ENCODE measurements at regions of chr11 and their contacts with region 1.

Region 1: GRCh38 chr11:100575870-100576705 is 111.0 kb upstream of the ARHGAP42 start:
- DNase-seq: peak; percentile 43
- ATAC-seq: peak; percentile 84
- H3K4me3 ChIP-seq: no peak overlapping the region
- H3K27ac ChIP-seq: no peak overlapping the region
- H3K4me1 ChIP-seq: peaks cover 0 to 5% of the 10 kb centered on the region in 2 experiments; a peak in 1 of 4 replicates
- H3K27me3 ChIP-seq: 0 out of 2 replicates have a peak, but pooled peaks cover under 1% of the 10 kb centered on the region
- CTCF ChIP-seq: peak; percentile 63 to 83 (median 79)
- POLR2A ChIP-seq: no peak
- RAD21 ChIP-seq: peak; percentile 92

Region 2: GRCh38 chr11:100855466-100856067 is 279.5 kb after region 1 on chr11:
- CTCF ChIA-PET with region 1: interaction called, 18 read pairs
- POLR2A ChIA-PET with region 1: no interaction called
- RAD21 ChIA-PET with region 1: interaction called, 4 to 7 read pairs
- intact Hi-C with region 1: loop called (anchors 1 kb)
- DNase-seq: peak; percentile 52
- ATAC-seq: no peak
- H3K4me3 ChIP-seq: no peak overlapping the region
- H3K27ac ChIP-seq: no peak overlapping the region
- H3K4me1 ChIP-seq: peaks cover 0 to 26% of the 10 kb centered on the region in 2 experiments; a peak in 2 of 4 replicates
- H3K27me3 ChIP-seq: no peaks in the 10 kb centered on the region
- CTCF ChIP-seq: peak; percentile 49 to 71 (median 69); a peak in 5 of 6 replicates
- POLR2A ChIP-seq: no peak
- RAD21 ChIP-seq: peak; percentile 84

Region 3: DNA sequence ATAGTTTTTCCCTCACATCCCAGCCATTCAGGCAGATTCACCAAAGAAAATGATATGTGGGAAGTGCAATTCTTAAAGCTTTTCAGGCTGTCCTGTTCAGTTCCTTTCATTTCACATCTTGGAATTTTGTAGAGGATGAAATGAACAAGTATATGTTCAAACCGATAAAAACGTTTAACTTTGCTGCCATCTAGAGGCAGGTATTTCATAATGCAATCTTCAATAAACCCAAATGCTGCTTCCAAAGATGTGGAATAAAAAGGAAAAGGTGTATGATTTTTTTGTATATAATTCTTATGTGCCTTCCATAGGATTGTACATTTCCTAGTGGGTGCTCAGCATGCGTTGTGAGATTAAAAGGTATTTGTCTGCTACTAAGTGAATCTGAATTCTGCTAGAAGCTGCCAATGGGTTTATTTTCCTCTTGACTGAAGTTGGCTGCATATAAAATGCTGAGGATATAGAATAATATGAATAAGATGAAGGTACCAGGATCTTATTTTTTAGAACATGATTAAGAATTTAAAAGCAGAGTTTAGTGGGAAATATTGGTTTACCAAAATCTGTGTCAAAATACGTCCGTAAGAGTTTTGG is 354.2 kb after region 1 on chr11:
- CTCF ChIA-PET with region 1: interaction called, 28 read pairs
- POLR2A ChIA-PET with region 1: no interaction called
- RAD21 ChIA-PET with region 1: no interaction called
- intact Hi-C with region 1: loop called (anchors 1 kb)
- DNase-seq: peak; percentile 47
- ATAC-seq: peak; percentile 72
- H3K4me3 ChIP-seq: no peak overlapping the region
- H3K27ac ChIP-seq: no peak overlapping the region
- H3K4me1 ChIP-seq: peaks cover 4 to 33% of the 10 kb centered on the region in 2 experiments; a peak in 3 of 4 replicates
- H3K27me3 ChIP-seq: no peaks in the 10 kb centered on the region
- CTCF ChIP-seq: peak; percentile 46 to 80 (median 47); a peak in 4 of 6 replicates
- POLR2A ChIP-seq: no peak
- RAD21 ChIP-seq: peak; percentile 69